Caco-2 (cell line): ENCODE measurements at regions of chr3 and their contacts with region 1.

Region 1: DNA sequence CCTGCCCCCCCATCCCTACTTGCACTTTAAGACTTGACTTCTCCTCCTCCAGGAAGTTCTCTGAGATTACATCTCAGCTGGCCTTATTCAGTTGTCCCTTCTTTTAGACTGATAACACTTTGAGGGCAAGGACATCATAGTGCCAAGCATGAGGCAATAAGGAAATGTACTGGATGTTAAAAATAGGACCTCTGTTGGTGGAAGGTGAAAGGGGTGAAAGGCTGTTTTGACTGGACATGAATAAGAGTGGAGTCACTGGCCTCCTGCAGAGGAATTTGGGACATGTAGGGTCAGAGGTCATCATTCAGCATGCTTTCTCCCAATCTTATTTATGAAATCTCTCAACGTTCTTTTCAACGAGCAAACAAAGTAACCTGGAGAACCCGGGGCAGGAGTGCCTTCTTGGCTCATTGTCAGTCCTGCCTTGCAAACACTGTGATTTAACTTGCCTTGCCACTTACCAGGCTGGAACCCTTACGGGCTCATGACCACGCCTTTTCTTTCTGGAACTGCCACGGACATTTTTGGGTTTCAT is 38.6 kb downstream of the TRIM71 start:
- DNase-seq: no peak
- H3K4me3 ChIP-seq: no peak overlapping the region
- H3K4me3 Mint-ChIP-seq: peak overlapping the region; percentile 20
- H3K27ac Mint-ChIP-seq: peak overlapping the region; percentile 72
- H3K4me1 ChIP-seq: peaks cover 50% of the 10 kb centered on the region
- H3K4me1 Mint-ChIP-seq: peaks cover 37% of the 10 kb centered on the region
- H3K27me3 ChIP-seq: no peaks in the 10 kb centered on the region
- H3K27me3 Mint-ChIP-seq: no peaks in the 10 kb centered on the region
- CTCF ChIP-seq: no peak

Region 2: GRCh38 chr3:32842531-32842931 is 13.9 kb before region 1 on chr3:
- CTCF ChIA-PET with region 1: no interaction called
- POLR2A ChIA-PET with region 1: no interaction called
- intact Hi-C with region 1: loop called (anchors 1 kb)
- DNase-seq: no peak
- H3K4me3 ChIP-seq: no peak overlapping the region
- H3K4me3 Mint-ChIP-seq: peak overlapping the region; percentile 24
- H3K27ac Mint-ChIP-seq: peak overlapping the region; percentile 50
- H3K4me1 ChIP-seq: peaks cover 81% of the 10 kb centered on the region
- H3K4me1 Mint-ChIP-seq: peaks cover 43% of the 10 kb centered on the region
- H3K27me3 ChIP-seq: no peaks in the 10 kb centered on the region
- H3K27me3 Mint-ChIP-seq: no peaks in the 10 kb centered on the region
- CTCF ChIP-seq: no peak